Colonic mucosa (tissue), 4 donors: ENCODE measurements at regions of chr10 and their contacts with region 1.

Region 1: DNA sequence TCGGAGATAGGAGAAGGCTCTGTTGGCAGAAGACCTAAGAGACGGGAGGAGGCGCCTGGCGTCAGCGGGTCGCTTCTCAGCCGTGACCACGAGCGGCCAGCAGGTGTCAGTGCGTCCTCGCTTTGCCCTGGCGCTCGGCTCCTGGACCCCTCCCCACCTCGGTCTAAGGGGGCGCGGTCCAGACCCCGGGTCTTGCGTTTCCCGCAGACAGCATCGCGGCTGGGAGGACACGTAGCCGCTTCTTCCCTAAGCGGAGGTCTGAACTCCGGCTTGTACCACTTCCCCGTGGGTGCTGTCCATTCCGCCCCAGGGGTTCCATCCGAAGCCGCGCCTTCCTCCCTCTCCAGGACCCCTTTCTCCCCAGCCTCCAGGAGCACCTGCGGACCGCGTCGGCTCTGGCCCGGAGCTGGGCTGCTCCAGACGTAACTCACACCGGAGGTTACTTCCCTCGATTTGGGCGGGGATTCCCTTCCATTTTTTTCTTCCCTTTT is 593 bp upstream of the ADRA2A start:
- DNase-seq: peak; percentile 77
- H3K4me3 ChIP-seq: peak overlapping the region; percentile 76
- H3K27ac ChIP-seq: peak overlapping the region; percentile 60
- H3K4me1 ChIP-seq: peaks cover 10% of the 10 kb centered on the region
- H3K27me3 ChIP-seq: peaks cover 11% of the 10 kb centered on the region
- CTCF ChIP-seq: peak; percentile 78

Region 2: GRCh38 chr10:110893559-110894179 is 182.6 kb before region 1 on chr10:
- intact Hi-C with region 1: no loop called
- DNase-seq: no peak
- H3K4me3 ChIP-seq: no peak overlapping the region
- H3K27ac ChIP-seq: no peak overlapping the region
- H3K4me1 ChIP-seq: peaks cover 4% of the 10 kb centered on the region
- H3K27me3 ChIP-seq: no peaks in the 10 kb centered on the region
- CTCF ChIP-seq: no peak

Region 3: GRCh38 chr10:111207500-111207899 is 131.3 kb after region 1 on chr10:
- intact Hi-C with region 1: loop called (anchors 1 kb)
- DNase-seq: peak; percentile 71
- H3K4me3 ChIP-seq: no peak overlapping the region
- H3K27ac ChIP-seq: no peak overlapping the region
- H3K4me1 ChIP-seq: no peaks in the 10 kb centered on the region
- H3K27me3 ChIP-seq: no peaks in the 10 kb centered on the region
- CTCF ChIP-seq: peak; percentile 40

Region 4: GRCh38 chr10:111360260-111360925 is 284.2 kb after region 1 on chr10:
- intact Hi-C with region 1: loop called (anchors 5 kb)
- DNase-seq: peak; percentile 31
- H3K4me3 ChIP-seq: no peak overlapping the region
- H3K27ac ChIP-seq: no peak overlapping the region
- H3K4me1 ChIP-seq: no peaks in the 10 kb centered on the region
- H3K27me3 ChIP-seq: no peaks in the 10 kb centered on the region
- CTCF ChIP-seq: peak; percentile 43

Region 5: GRCh38 chr10:111598436-111599059 is 522.3 kb after region 1 on chr10:
- intact Hi-C with region 1: loop called (anchors 10 kb)
- DNase-seq: peak; percentile 57
- H3K4me3 ChIP-seq: no peak overlapping the region
- H3K27ac ChIP-seq: no peak overlapping the region
- H3K4me1 ChIP-seq: no peaks in the 10 kb centered on the region
- H3K27me3 ChIP-seq: no peaks in the 10 kb centered on the region
- CTCF ChIP-seq: peak; percentile 89